Mammary epithelial cell (primary cell): ENCODE measurements at regions of chr2 and their contacts with region 1.

Region 1: GRCh38 chr2:110999275-111000025 is 121.3 kb upstream of the BCL2L11 start:
- DNase-seq: no peak
- H3K4me3 ChIP-seq: no peak overlapping the region
- H3K27ac ChIP-seq: no peak overlapping the region
- H3K4me1 ChIP-seq: no peaks in the 10 kb centered on the region
- H3K27me3 ChIP-seq: peaks cover 4% of the 10 kb centered on the region
- CTCF ChIP-seq: no peak

Region 2: DNA sequence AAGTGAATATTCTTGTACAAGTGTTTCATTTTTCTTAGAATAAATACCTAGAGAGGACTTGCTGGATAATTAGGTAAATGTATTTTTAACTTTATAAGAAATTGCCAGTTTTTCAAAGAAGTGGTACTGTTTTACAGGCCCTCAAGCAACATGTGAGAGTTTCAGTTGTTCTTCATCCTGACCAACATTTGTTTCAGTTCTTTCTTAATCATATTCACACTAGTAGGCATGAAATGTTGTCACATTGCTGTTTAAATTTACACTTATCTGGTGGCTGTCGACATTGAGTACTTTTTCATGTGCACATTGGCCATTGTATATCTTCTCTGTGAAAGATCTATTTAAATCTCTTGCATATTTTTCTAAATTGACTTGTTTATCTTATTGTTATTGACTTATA is 89.0 kb before region 1 on chr2:
- CTCF ChIA-PET with region 1: no interaction called
- dilution Hi-C with region 1: no loop called
- in situ Hi-C with region 1: no loop called
- intact Hi-C with region 1: no loop called
- DNase-seq: no peak
- H3K4me3 ChIP-seq: no peak overlapping the region
- H3K27ac ChIP-seq: no peak overlapping the region
- H3K4me1 ChIP-seq: no peaks in the 10 kb centered on the region
- H3K27me3 ChIP-seq: no peaks in the 10 kb centered on the region
- CTCF ChIP-seq: no peak

Region 3: DNA sequence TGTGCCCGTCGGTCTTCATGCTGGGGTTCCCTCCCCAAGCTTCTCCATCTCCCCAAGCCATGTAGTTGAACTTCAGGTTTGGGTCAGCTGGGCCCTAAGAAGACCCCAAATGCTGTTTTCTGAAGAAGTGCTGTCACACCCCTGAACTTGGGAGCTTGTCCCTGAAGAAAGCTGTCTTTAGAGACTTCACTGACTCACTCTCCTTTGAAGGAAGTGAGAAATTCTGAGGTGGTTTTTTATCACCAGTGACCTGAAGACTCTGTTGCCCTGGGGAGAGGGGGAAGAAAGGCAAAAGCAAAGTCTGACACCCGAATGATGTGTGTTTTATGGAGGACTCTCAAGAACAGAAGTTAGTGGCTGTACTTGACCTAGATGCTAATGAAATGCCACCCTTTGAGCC is 37.7 kb after region 1 on chr2:
- CTCF ChIA-PET with region 1: no interaction called
- dilution Hi-C with region 1: loop called (anchors 5 kb)
- in situ Hi-C with region 1: no loop called
- intact Hi-C with region 1: no loop called
- DNase-seq: peak; percentile 12
- H3K4me3 ChIP-seq: no peak overlapping the region
- H3K27ac ChIP-seq: no peak overlapping the region
- H3K4me1 ChIP-seq: peaks cover 13% of the 10 kb centered on the region
- H3K27me3 ChIP-seq: no peaks in the 10 kb centered on the region
- CTCF ChIP-seq: no peak